A549 (cell line): ENCODE measurements at regions of chr15 and their contacts with region 1.

Region 1: GRCh38 chr15:66566963-66567531 is 1.2 kb upstream of the LCTL start:
- DNase-seq: peak; percentile 81 to 86
- ATAC-seq: peak; percentile 77 to 92
- H3K4me3 ChIP-seq: no peak overlapping the region
- H3K27ac ChIP-seq: 0 out of 6 replicates have a peak overlapping the region, but pooled peaks of 1 of the 2 experiments have one; percentile 12
- H3K4me1 ChIP-seq: no peaks in the 10 kb centered on the region
- CTCF ChIP-seq: peak; percentile 91
- EP300 ChIP-seq: no peak
- POLR2A ChIP-seq: no peak
- RAD21 ChIP-seq: peak; percentile 46 to 54; a peak in 4 of 5 replicates

Region 2: GRCh38 chr15:66524838-66525237 is 42.2 kb before region 1 on chr15:
- CTCF ChIA-PET with region 1: interaction called, 16 read pairs
- POLR2A ChIA-PET with region 1: no interaction called
- DNase-seq: no peak
- ATAC-seq: no peak
- H3K4me3 ChIP-seq: no peak overlapping the region
- H3K27ac ChIP-seq: no peak overlapping the region
- H3K4me1 ChIP-seq: no peaks in the 10 kb centered on the region
- CTCF ChIP-seq: no peak
- EP300 ChIP-seq: no peak
- POLR2A ChIP-seq: no peak
- RAD21 ChIP-seq: no peak

Region 3: GRCh38 chr15:66545249-66545648 is 21.8 kb before region 1 on chr15:
- CTCF ChIA-PET with region 1: interaction called, 88 read pairs
- POLR2A ChIA-PET with region 1: no interaction called
- DNase-seq: no peak
- ATAC-seq: no peak
- H3K4me3 ChIP-seq: no peak overlapping the region
- H3K27ac ChIP-seq: no peak overlapping the region
- H3K4me1 ChIP-seq: no peaks in the 10 kb centered on the region
- CTCF ChIP-seq: no peak
- EP300 ChIP-seq: no peak
- POLR2A ChIP-seq: no peak
- RAD21 ChIP-seq: no peak

Region 4: GRCh38 chr15:66578286-66578875 is 11.3 kb after region 1 on chr15:
- CTCF ChIA-PET with region 1: interaction called, 93 read pairs
- POLR2A ChIA-PET with region 1: no interaction called
- DNase-seq: no peak
- ATAC-seq: no peak
- H3K4me3 ChIP-seq: no peak overlapping the region
- H3K27ac ChIP-seq: no peak overlapping the region
- H3K4me1 ChIP-seq: no peaks in the 10 kb centered on the region
- CTCF ChIP-seq: no peak
- EP300 ChIP-seq: no peak
- POLR2A ChIP-seq: no peak
- RAD21 ChIP-seq: no peak

Region 5: GRCh38 chr15:66588537-66588936 is 21.5 kb after region 1 on chr15:
- CTCF ChIA-PET with region 1: interaction called, 48 read pairs
- POLR2A ChIA-PET with region 1: no interaction called
- DNase-seq: no peak
- ATAC-seq: peak; percentile 58 to 79; a peak in 4 of 6 replicates
- H3K4me3 ChIP-seq: no peak overlapping the region
- H3K27ac ChIP-seq: no peak overlapping the region
- H3K4me1 ChIP-seq: no peaks in the 10 kb centered on the region
- CTCF ChIP-seq: peak; percentile 18; the same call in 1 of the 3 replicates
- EP300 ChIP-seq: no peak
- POLR2A ChIP-seq: no peak
- RAD21 ChIP-seq: peak in 1 of 2 experiments; percentile 40; a peak in 2 of 5 replicates